CD4-positive, alpha-beta memory T cell (primary cell): ENCODE measurements at regions of chr2 and their contacts with region 1.

Region 1: DNA sequence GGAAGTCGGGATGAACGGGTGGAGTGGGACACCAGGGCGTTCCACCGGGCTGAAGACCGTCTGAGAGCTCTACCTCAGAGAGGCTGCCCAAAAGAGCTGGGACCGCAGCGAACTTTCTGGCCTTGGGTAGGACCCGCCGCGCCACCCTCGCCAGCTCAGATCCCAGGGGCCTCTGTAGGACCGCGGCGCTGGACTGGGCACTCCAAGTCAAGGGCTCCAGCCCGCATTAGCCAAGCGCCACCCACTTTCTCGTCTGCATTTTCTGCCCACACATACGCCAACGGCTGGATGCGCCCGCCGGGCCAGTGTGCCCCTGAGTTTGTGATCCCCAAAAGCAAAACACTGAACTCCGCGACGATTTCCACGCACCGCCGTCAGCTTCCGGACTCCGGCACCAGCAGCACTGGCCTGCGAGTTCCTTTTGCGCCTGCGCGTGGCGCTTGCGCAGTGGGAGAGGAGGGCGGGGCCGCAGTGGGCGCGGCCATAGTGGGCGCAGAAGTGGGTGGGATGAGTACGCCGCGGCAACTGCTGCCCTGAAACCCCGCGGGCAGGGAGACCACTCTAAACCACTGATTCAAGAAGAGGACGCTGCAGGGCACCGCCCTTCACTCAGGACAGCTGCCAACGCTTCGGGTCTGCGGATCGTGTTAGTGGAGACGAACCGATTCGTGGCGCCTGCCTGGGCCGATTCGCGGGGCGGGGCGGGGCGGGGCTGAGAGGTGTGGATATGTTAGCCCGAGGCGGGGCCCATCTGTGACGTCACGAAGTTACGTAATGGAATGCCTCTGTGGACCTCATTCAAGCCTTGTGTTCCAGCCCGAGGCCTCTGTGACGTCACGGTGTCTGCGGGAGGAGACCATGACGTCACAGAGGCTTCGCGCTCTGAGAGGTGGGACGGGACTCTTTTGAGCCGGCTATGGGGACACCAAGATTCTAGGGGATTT is 10.5 kb downstream of the OSR1 start:
- DNase-seq: peak; percentile 97 to 100 (median 98)
- H3K4me3 ChIP-seq: peak overlapping the region; percentile 72 to 83
- H3K4me3 Mint-ChIP-seq: peak overlapping the region; percentile 96 to 99 (median 98)
- H3K27ac ChIP-seq: peak overlapping the region; percentile 92
- H3K27ac Mint-ChIP-seq: peak overlapping the region; percentile 97 to 100 (median 98)
- H3K4me1 ChIP-seq: peaks cover 38% of the 10 kb centered on the region
- H3K4me1 Mint-ChIP-seq: peaks cover 13 to 45% (median 29%) of the 10 kb centered on the region in 4 donors
- H3K27me3 ChIP-seq: peaks cover 23% of the 10 kb centered on the region
- H3K27me3 Mint-ChIP-seq: peaks cover 24 to 35% of the 10 kb centered on the region in 2 donors

Region 2: DNA sequence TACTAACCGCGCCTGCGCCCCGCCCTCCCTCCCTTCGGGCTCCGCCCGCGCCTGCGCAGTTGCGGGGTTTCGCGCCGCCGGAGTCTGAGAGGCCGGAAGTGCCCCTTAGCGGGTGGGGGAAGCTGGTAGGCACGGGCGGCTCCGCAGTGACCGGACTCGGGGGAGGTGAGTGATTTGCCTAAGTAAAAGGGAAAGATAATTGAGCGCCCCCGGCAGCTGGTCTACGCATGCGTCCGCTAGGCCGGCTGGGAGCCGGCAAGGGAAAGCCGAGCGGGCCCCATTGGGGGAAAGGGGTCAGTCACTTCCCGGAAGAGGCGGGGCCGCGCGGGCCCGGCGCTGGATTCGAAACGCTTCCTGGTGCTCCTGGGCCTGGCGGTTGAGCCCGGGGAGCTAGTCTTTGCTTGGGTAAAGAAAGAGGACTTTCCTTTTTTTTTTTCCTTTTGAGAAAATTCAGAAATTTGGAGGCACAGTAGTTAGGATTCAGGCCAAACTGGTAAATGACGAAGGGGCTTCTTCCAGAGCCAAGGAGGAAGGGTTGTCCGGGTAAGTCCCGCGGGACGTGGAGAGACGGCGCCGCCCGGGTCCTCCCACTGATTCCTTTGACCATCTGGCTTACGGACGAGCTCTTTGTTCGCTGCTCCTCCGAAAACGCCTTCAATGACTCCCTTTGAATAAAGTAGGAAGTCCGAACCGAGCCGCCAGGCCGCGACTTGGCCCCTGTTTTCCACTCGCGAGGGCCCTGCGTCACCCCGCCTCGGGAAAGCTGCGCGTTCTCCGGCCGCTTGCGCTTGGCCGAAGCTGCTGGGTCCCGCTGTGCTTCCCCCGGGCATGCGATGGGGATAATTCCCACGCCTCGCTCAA is 1593.9 kb before region 1 on chr2 and contains the starts of genes GEN1 and SMC6:
- CTCF ChIA-PET with region 1: no interaction called
- POLR2A ChIA-PET with region 1: no interaction called
- intact Hi-C with region 1: loop called (anchors 1 kb)
- DNase-seq: peak; percentile 87 to 96 (median 92)
- H3K4me3 ChIP-seq: peak within 1 kb of the TSS; percentile 86 to 90
- H3K4me3 Mint-ChIP-seq: peak within 1 kb of the TSS; percentile 90 to 97 (median 94)
- H3K27ac ChIP-seq: peak within 1 kb of the TSS; percentile 95
- H3K27ac Mint-ChIP-seq: peak within 1 kb of the TSS; percentile 95 to 99 (median 97)
- H3K4me1 ChIP-seq: peaks cover 31% of the 10 kb centered on the region
- H3K4me1 Mint-ChIP-seq: peaks cover 19 to 34% (median 24%) of the 10 kb centered on the region in 4 donors
- H3K27me3 ChIP-seq: no peaks in the 10 kb centered on the region
- H3K27me3 Mint-ChIP-seq: no peaks in the 10 kb centered on the region
- total RNA-seq, gene GEN1: 6.2 TPM
- total RNA-seq, gene SMC6: 19.1 to 19.2 TPM

Region 3: DNA sequence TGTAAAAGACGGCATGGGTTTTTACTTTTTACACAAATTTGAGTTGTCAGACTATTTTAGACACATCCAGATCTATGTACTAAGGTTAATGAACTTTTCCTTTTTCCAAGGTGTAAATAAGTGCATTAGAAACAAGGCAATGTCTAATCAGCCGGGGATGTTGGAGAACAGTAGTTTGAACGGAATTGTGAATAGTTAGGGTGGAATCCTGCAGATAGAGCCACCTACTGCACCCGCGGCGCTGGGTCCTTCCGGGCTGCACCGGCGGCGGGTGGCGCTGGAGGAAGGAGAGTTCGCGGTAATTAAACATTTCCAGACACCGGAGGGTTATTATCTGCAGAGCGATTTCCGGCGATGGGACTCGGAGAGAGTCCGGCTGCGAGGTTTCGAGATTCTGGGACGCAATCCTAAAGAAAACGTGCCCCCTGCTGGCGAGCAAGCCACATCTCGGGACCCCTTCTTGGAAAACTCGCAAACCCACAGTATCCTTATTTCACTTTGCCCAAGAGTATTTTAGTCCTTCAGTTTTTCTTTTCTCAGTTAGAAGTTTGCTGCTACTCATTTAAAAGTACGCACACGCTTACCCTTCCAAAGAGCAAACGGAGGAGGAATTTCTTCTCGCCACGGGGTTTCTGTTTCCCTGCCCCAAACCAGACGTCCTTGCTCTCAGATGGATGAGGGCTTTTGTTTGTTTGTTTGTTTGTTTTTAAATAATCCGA is 15.0 kb after region 1 on chr2:
- CTCF ChIA-PET with region 1: interaction called, 36 read pairs
- POLR2A ChIA-PET with region 1: interaction called, 67 read pairs
- intact Hi-C with region 1: loop called (anchors 1 kb)
- DNase-seq: peak in 3 of 5 donors; percentile 42 to 57 (median 43)
- H3K4me3 ChIP-seq: peak overlapping the region; percentile 77 to 87
- H3K4me3 Mint-ChIP-seq: peak overlapping the region; percentile 89 to 98 (median 96)
- H3K27ac ChIP-seq: peak overlapping the region; percentile 15
- H3K27ac Mint-ChIP-seq: peak overlapping the region; percentile 23 to 93 (median 88)
- H3K4me1 ChIP-seq: peaks cover 35% of the 10 kb centered on the region
- H3K4me1 Mint-ChIP-seq: peaks cover 15 to 51% (median 32%) of the 10 kb centered on the region in 4 donors
- H3K27me3 ChIP-seq: peaks cover 34% of the 10 kb centered on the region
- H3K27me3 Mint-ChIP-seq: peaks cover 23 to 33% of the 10 kb centered on the region in 2 donors

Region 4: DNA sequence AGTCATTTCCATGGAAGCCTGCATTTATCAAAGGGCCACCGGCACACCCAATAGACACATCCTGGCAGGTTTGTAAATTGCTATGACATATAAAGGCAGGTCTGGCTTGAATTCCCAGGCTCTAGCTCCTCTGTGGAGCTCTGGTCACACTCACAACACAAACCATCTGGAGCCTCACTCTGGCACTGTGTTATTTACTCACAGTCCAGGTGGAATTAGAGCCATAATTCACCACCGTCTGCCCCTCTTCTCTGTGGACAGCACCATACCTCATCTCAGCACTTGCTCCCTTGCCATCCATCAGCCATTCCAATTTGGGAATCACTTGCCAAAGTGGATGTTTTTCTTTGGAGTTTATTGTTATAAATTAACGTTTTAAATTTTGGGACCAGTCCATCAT is 94.8 kb after region 1 on chr2:
- CTCF ChIA-PET with region 1: no interaction called
- POLR2A ChIA-PET with region 1: no interaction called
- intact Hi-C with region 1: no loop called
- DNase-seq: no peak
- H3K4me3 ChIP-seq: no peak overlapping the region
- H3K4me3 Mint-ChIP-seq: no peak overlapping the region
- H3K27ac ChIP-seq: no peak overlapping the region
- H3K27ac Mint-ChIP-seq: peak overlapping the region in 1 of 7 donors; percentile 7
- H3K4me1 ChIP-seq: no peaks in the 10 kb centered on the region
- H3K4me1 Mint-ChIP-seq: no peaks in the 10 kb centered on the region
- H3K27me3 ChIP-seq: no peaks in the 10 kb centered on the region
- H3K27me3 Mint-ChIP-seq: peaks cover 5 to 8% of the 10 kb centered on the region in 2 donors

Region 5: DNA sequence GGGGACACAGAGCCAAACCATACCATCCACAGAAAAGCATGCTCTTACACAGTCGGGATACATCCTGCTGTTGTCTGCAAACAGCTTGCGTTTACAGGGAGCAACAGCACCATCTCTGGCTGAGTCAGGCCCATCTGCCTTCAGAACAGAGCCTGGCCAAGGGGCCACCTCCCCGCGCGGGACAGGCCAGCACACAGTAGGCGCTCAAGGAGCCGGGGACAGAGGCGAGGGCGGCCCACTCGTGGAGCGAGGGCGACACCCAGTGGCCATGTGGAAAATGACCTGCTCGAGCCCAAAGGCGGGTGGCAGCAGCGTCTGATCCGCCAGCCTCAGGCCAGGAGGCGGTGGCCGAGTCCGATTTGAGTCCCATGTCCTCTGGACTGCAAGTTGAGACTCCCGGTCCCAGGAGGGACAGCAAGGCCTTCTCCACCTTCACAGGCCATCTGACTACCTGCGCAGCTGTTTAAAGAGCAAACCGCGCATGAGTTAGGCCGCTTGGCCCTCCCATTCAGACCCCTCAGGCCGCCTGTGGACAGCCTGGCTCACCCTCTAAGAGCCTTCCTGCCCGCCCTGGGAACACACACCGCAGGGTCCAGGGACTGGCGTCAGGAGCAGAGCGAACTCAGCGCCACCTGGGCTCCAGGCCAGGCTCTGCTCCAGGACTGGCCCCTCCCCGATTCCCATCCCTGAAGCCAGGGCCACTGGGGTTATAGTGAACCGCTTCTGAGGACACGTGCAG is 515.6 kb after region 1 on chr2:
- CTCF ChIA-PET with region 1: interaction called, 4 read pairs
- POLR2A ChIA-PET with region 1: interaction called, 14 read pairs
- intact Hi-C with region 1: loop called (anchors 1 kb)
- DNase-seq: peak; percentile 58 to 70 (median 61)
- H3K4me3 ChIP-seq: no peak overlapping the region
- H3K4me3 Mint-ChIP-seq: no peak overlapping the region
- H3K27ac ChIP-seq: no peak overlapping the region
- H3K27ac Mint-ChIP-seq: peak overlapping the region in 1 of 7 donors; percentile 67
- H3K4me1 ChIP-seq: peaks cover 13% of the 10 kb centered on the region
- H3K4me1 Mint-ChIP-seq: peaks cover 4 to 18% (median 8%) of the 10 kb centered on the region in 4 donors
- H3K27me3 ChIP-seq: no peaks in the 10 kb centered on the region
- H3K27me3 Mint-ChIP-seq: peaks cover 1 to 5% of the 10 kb centered on the region in 2 donors

Region 6: DNA sequence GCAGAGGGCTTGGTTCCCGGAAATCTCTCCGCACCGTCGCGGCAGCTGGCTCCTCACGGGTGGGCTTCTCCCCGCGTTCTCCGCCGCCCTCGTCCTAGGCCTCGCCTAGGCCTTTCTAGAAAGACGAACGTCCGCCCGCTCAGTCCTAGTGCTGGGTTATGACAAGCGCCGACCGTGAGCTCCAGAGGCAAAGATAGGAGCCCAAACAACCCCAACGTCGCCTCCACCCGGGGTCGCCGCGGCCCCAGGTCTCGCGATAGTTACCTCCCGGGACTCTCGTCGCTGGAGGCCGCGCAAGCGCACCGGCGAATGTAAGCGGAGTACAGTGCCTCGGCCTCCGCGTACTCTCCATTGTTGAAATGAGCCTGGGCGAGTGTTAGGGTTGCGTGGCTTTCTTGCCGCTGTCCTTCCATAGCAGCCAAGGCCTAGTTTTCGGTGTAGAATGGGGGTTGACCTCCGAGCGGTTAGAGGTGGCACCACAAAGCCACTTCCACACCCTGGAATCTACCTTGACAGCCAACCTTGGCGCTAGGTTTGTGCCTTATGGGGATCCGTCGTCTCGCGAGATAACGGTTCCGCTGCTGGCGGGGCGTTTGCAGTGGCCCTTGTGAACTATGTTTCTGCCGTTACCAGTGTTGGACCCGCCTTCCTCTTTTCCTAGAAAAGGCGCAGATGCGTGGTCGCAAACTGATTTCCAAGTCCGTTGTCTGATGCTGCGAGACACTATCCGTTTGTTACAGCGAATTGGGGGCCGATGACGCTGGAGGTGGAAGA is 553.7 kb after region 1 on chr2 and contains the start of gene TTC32:
- CTCF ChIA-PET with region 1: no interaction called
- POLR2A ChIA-PET with region 1: interaction called, 4 read pairs
- intact Hi-C with region 1: loop called (anchors 1 kb)
- DNase-seq: peak; percentile 95 to 98 (median 97)
- H3K4me3 ChIP-seq: peak within 1 kb of the TSS; percentile 59 to 63
- H3K4me3 Mint-ChIP-seq: peak within 1 kb of the TSS; percentile 92 to 99 (median 96)
- H3K27ac ChIP-seq: peak within 1 kb of the TSS; percentile 92
- H3K27ac Mint-ChIP-seq: peak within 1 kb of the TSS; percentile 87 to 100 (median 98)
- H3K4me1 ChIP-seq: peaks cover 37% of the 10 kb centered on the region
- H3K4me1 Mint-ChIP-seq: peaks cover 18 to 45% (median 29%) of the 10 kb centered on the region in 4 donors
- H3K27me3 ChIP-seq: no peaks in the 10 kb centered on the region
- H3K27me3 Mint-ChIP-seq: no peaks in the 10 kb centered on the region
- total RNA-seq, gene TTC32: 44.4 to 48.7 TPM

Region 7: DNA sequence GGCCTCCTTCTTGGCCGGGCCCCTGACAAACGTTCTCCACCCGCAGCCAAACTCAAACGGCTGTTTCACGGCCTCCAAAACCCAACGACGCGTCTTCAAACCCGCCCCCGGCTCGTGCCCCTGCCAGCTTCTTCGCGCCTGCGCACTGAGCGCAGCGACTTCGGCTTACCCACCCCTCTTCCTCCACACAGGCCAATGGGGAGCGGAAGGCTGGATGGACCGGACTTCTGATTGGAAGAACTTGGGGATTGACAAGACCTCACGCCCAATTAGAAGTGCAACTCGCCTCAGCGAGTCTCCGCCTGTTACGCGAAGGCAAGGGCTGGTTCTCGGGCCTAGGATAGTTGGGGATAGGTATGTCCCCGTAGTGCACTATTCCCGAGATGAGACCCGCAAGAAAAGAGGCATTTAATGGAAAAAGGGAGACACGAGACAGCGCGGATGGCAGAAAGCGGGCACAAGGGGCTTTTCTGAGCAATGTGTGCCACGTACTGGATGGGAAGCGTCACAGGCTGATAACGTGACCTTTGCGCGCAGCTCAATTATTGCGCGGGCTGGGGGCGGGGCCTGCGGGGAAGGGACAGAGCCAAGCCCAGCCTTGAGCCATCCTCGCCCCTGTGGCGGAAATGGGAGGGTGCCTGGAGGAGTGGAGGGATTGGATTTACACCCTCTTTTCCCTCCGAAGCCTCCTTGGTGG is 703.8 kb after region 1 on chr2 and contains the start of gene LAPTM4A:
- CTCF ChIA-PET with region 1: no interaction called
- POLR2A ChIA-PET with region 1: no interaction called
- intact Hi-C with region 1: loop called (anchors 2 kb)
- DNase-seq: peak; percentile 97 to 99 (median 99)
- H3K4me3 ChIP-seq: peak within 1 kb of the TSS; percentile 76 to 90
- H3K4me3 Mint-ChIP-seq: no peak within 1 kb of the TSS
- H3K27ac ChIP-seq: peak within 1 kb of the TSS; percentile 94
- H3K27ac Mint-ChIP-seq: no peak within 1 kb of the TSS
- H3K4me1 ChIP-seq: peaks cover 35% of the 10 kb centered on the region
- H3K4me1 Mint-ChIP-seq: peaks cover 23 to 32% (median 26%) of the 10 kb centered on the region in 4 donors
- H3K27me3 ChIP-seq: peaks cover 8% of the 10 kb centered on the region
- H3K27me3 Mint-ChIP-seq: peaks cover 13 to 15% of the 10 kb centered on the region in 2 donors
- total RNA-seq, gene LAPTM4A: 47.4 to 50.8 TPM

Region 8: DNA sequence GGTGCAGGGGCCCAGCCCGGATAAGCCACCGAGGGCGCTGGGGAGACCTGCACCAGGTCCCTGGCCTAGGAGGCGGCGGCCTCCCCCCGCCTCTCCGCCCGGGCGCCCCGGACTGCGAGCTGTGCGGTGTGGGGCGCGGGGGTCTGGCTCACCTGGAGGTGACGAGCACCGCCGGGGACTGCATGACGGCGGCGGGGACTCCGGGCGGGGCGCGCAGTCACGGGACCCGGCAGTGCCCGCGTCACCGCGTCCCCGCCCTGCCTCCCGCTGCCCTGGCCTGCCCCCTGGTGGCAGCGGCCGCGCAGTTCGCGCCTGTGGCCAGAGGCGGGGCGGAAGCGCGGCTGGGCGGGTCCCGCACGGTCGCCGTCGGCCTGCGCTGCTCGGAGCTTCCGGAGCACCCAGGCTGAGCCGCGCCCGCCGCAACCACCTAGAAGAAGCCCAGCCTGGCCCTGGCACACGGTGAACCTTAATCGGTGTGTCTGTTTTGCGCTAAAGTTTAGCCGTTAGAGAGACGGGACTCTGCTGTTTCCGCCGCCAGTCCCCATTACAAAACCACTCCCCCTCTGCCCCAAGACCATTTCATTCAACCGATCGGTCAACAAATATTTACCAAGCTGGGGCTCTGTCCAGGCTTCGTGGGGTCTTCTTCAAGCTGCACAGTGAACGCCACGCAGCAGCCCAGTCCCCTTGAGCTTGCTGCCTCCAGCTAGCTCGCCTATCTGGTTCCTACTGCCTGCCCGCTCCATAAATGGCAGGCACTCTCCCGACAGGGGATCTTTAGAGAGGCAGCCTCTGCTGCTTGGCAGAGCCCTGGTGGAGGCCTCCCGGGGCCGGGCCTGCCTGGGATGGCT is 1303.2 kb after region 1 on chr2 and contains the start of gene HS1BP3:
- CTCF ChIA-PET with region 1: interaction called, 4 read pairs
- POLR2A ChIA-PET with region 1: no interaction called
- intact Hi-C with region 1: loop called (anchors 5 kb)
- DNase-seq: peak; percentile 88 to 98 (median 94)
- H3K4me3 ChIP-seq: peak within 1 kb of the TSS; percentile 50 to 87
- H3K4me3 Mint-ChIP-seq: peak within 1 kb of the TSS; percentile 87 to 93 (median 90)
- H3K27ac ChIP-seq: peak within 1 kb of the TSS; percentile 89
- H3K27ac Mint-ChIP-seq: peak within 1 kb of the TSS; percentile 92 to 98 (median 97)
- H3K4me1 ChIP-seq: peaks cover 20% of the 10 kb centered on the region
- H3K4me1 Mint-ChIP-seq: peaks cover 22 to 42% (median 36%) of the 10 kb centered on the region in 4 donors
- H3K27me3 ChIP-seq: no peaks in the 10 kb centered on the region
- H3K27me3 Mint-ChIP-seq: no peaks in the 10 kb centered on the region
- total RNA-seq, gene HS1BP3: 20.1 TPM